ENCODE measurements at regions of chr12 and their contacts with region 1.

Region 1: GRCh38 chr12:26062566-26062965 is 62.3 kb downstream of the BHLHE41 start:
- DNase-seq: no peak
- H3K4me3 Mint-ChIP-seq: no peak overlapping the region
- H3K27ac Mint-ChIP-seq: no peak overlapping the region
- H3K4me1 Mint-ChIP-seq: no peaks in the 10 kb centered on the region
- H3K27me3 Mint-ChIP-seq: peaks cover 7% of the 10 kb centered on the region

Region 2: GRCh38 chr12:25557830-25558436 is 504.6 kb before region 1 on chr12:
- CTCF ChIA-PET with region 1: interaction called, 11 read pairs
- intact Hi-C with region 1: no loop called
- DNase-seq: peak; percentile 33
- H3K4me3 Mint-ChIP-seq: no peak overlapping the region
- H3K27ac Mint-ChIP-seq: no peak overlapping the region
- H3K4me1 Mint-ChIP-seq: peaks cover 6% of the 10 kb centered on the region
- H3K27me3 Mint-ChIP-seq: no peaks in the 10 kb centered on the region

Region 3: DNA sequence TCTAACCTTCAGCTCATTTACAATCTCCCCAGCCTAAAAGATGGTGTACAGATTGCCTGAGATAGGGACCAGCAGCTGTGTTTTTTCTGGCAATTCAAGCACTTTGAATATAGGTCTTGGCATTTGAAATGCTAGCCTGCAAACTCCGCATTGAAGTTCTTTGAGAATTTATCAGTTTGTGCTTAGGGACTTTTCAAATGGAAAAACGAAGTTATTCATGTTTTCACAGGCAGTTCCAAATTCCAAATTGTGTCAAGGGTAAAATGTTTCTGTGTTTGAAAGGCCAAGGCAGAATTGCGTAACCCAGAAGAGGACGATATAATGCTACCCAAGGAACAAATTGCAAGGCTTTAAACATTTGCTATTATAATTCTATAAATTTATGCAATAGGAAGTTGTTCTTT is 273.0 kb before region 1 on chr12:
- CTCF ChIA-PET with region 1: no interaction called
- intact Hi-C with region 1: no loop called
- DNase-seq: no peak
- H3K4me3 Mint-ChIP-seq: no peak overlapping the region
- H3K27ac Mint-ChIP-seq: no peak overlapping the region
- H3K4me1 Mint-ChIP-seq: no peaks in the 10 kb centered on the region
- H3K27me3 Mint-ChIP-seq: no peaks in the 10 kb centered on the region

Region 4: GRCh38 chr12:25958428-25959070 is 104.0 kb before region 1 on chr12 and contains the start of gene RASSF8:
- CTCF ChIA-PET with region 1: no interaction called
- intact Hi-C with region 1: no loop called
- DNase-seq: peak; percentile 23
- H3K4me3 Mint-ChIP-seq: peak within 1 kb of the TSS; percentile 78
- H3K27ac Mint-ChIP-seq: no peak within 1 kb of the TSS
- H3K4me1 Mint-ChIP-seq: peaks cover 11% of the 10 kb centered on the region
- H3K27me3 Mint-ChIP-seq: peaks cover 58% of the 10 kb centered on the region
- total RNA-seq, gene RASSF8: 0.32 to 0.81 TPM